Activated B cell treated with CpG ODN at 0.5 μM for 24 hours (primary cell): ENCODE measurements at regions of chr5 and their contacts with region 1.

Region 1: GRCh38 chr5:56270568-56271392 is 37.6 kb upstream of the ANKRD55 start:
- DNase-seq: peak; percentile 60
- ATAC-seq: peak; percentile 98
- H3K4me3 Mint-ChIP-seq: peak overlapping the region; percentile 49
- H3K27ac Mint-ChIP-seq: peak overlapping the region; percentile 37
- H3K4me1 Mint-ChIP-seq: peaks cover 23% of the 10 kb centered on the region
- H3K27me3 Mint-ChIP-seq: no peaks in the 10 kb centered on the region
- CTCF ChIP-seq: peak; percentile 73

Region 2: GRCh38 chr5:55936100-55936693 is 334.6 kb before region 1 on chr5:
- CTCF ChIA-PET with region 1: interaction called, 14 read pairs
- POLR2A ChIA-PET with region 1: no interaction called
- intact Hi-C with region 1: loop called (anchors 1 kb)
- DNase-seq: peak; percentile 56
- ATAC-seq: peak; percentile 93
- H3K4me3 Mint-ChIP-seq: no peak overlapping the region
- H3K27ac Mint-ChIP-seq: no peak overlapping the region
- H3K4me1 Mint-ChIP-seq: no peaks in the 10 kb centered on the region
- H3K27me3 Mint-ChIP-seq: no peaks in the 10 kb centered on the region
- CTCF ChIP-seq: peak; percentile 48

Region 3: DNA sequence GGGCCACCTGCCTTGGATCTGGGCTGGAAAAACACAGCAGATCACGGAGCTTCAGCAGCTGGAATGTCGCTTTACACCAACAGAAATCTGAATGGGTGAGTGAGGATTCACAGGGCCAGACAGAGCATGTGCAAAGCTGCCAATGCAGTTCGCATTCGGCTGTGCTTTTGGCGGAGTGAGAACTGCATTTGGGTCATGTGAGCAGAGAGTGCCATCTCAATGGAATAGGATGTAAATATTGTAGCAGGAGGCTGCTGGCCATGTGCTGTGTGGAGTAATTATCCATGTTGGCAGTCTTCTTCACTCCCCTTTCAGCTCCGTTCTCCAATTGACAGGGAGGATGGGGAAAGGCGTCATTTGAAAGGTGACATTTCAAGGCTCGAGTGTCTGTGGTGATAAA is 37.5 kb before region 1 on chr5 and contains the start of gene ANKRD55:
- CTCF ChIA-PET with region 1: no interaction called
- POLR2A ChIA-PET with region 1: no interaction called
- intact Hi-C with region 1: no loop called
- DNase-seq: no peak
- ATAC-seq: no peak
- H3K4me3 Mint-ChIP-seq: no peak within 1 kb of the TSS
- H3K27ac Mint-ChIP-seq: no peak within 1 kb of the TSS
- H3K4me1 Mint-ChIP-seq: no peaks in the 10 kb centered on the region
- H3K27me3 Mint-ChIP-seq: peaks cover 22% of the 10 kb centered on the region
- CTCF ChIP-seq: no peak
- total RNA-seq, gene ANKRD55: not detected in 2 replicates

Region 4: DNA sequence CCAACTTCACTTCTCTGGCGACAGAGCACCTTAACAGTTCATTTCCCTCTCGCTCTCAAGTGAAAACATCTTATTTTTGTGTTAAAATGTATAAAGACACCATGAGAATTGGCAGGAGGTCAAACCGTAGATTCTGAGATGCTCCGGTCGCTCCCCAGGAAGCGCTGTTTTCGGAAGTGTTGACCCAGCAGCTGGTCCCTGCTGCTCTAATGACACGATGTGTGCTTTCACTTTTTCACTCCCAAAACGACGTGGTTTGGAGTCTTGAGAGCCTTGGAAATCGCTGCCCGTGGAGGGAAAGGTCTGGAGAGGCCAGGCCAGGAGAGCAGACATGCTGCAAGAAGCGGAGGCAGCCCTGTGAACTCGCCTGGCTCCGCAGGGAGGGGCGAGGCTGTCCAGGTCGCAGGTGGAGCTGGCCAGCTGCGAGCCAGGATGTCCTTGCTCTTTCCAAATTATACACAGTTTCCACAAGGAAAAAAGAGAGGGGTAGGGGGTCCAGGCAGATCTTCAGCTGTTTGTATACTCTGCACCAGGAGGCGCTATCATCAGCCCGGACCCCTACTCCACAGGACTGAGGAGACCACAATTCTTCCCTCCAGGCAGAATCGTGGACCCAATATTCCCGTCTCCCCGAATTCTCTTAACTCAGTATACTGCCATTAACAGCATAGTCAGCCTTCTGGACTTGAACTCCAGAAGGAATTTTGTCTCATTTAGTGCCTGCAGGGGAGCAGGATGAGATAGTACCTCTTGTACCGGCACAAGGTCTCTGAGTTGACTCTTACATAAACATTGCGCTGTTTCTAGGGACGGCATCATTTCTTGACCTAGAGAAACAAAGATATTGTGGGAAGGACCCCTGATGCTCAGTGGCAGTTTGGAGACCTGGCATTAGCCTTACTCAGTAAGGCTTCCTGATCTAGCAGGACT is 210.9 kb after region 1 on chr5:
- CTCF ChIA-PET with region 1: interaction called, 19 read pairs
- POLR2A ChIA-PET with region 1: no interaction called
- intact Hi-C with region 1: loop called (anchors 1 kb)
- DNase-seq: peak; percentile 41
- ATAC-seq: peak; percentile 14
- H3K4me3 Mint-ChIP-seq: peak overlapping the region; percentile 88
- H3K27ac Mint-ChIP-seq: peak overlapping the region; percentile 92
- H3K4me1 Mint-ChIP-seq: peaks cover 45% of the 10 kb centered on the region
- H3K27me3 Mint-ChIP-seq: no peaks in the 10 kb centered on the region
- CTCF ChIP-seq: no peak

Region 5: DNA sequence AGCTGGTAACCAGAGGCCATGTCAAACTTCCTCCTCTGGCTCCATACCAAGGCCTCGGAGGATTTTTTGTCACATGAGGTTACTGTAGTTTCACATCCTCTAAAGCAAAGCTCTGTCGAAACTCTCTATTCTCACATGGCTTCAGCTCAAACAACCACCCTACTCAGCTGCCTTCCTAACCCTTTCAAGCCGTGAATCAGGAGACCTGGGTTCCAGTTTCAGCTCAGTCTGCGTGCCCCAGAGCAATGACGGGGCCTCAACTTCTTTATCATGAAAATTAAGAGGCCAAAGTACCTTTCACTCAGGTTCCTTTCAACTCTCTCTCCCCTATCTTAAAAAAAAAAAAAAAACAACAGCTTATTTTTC is 399.3 kb after region 1 on chr5:
- CTCF ChIA-PET with region 1: interaction called, 13 read pairs
- POLR2A ChIA-PET with region 1: interaction called, 3 read pairs
- intact Hi-C with region 1: loop called (anchors 1 kb)
- DNase-seq: peak; percentile 51
- ATAC-seq: peak; percentile 91
- H3K4me3 Mint-ChIP-seq: peak overlapping the region; percentile 69
- H3K27ac Mint-ChIP-seq: peak overlapping the region; percentile 93
- H3K4me1 Mint-ChIP-seq: peaks cover 83% of the 10 kb centered on the region
- H3K27me3 Mint-ChIP-seq: no peaks in the 10 kb centered on the region
- CTCF ChIP-seq: no peak

Region 6: GRCh38 chr5:56827049-56827448 is 556.3 kb after region 1 on chr5:
- CTCF ChIA-PET with region 1: interaction called, 240 read pairs
- POLR2A ChIA-PET with region 1: no interaction called
- intact Hi-C with region 1: no loop called
- DNase-seq: no peak
- ATAC-seq: peak; percentile 11
- H3K4me3 Mint-ChIP-seq: peak overlapping the region; percentile 24
- H3K27ac Mint-ChIP-seq: peak overlapping the region; percentile 73
- H3K4me1 Mint-ChIP-seq: peaks cover 96% of the 10 kb centered on the region
- H3K27me3 Mint-ChIP-seq: no peaks in the 10 kb centered on the region
- CTCF ChIP-seq: no peak

Region 7: DNA sequence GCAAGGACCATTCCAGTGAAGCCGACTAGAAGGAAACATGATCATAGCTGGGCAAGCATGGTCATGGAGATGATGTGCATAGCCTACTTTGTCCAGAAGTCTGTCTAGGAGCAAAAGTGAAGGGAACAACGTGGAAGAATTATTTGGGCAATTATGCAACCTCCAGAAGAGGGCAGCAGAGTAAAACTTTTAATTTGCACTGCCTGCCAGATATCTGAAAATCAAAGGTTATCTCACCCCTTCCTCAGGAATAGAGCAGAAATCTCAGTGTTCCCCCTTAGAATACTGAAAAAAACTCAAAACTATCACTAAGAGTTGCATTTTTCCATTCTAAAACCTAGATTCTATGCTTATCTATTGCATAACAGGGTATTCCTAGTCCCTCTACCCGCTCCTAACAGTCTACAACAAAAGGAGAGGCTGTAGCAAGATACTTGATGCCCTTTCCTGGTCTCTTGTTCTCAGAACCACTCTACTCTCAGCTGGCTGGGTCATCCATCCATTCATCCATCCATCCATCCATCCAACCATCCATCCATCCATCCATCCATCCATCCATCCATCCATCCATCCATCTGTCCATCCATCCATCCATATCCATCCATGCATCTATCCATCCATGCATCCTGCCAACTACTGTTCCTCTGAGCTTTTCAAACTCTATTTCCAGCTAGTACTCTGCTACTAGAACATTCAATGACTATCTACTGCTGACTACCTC is 630.2 kb after region 1 on chr5:
- CTCF ChIA-PET with region 1: interaction called, 11 read pairs
- POLR2A ChIA-PET with region 1: no interaction called
- intact Hi-C with region 1: loop called (anchors 1 kb)
- DNase-seq: no peak
- ATAC-seq: peak; percentile 68
- H3K4me3 Mint-ChIP-seq: no peak overlapping the region
- H3K27ac Mint-ChIP-seq: no peak overlapping the region
- H3K4me1 Mint-ChIP-seq: no peaks in the 10 kb centered on the region
- H3K27me3 Mint-ChIP-seq: no peaks in the 10 kb centered on the region
- CTCF ChIP-seq: peak; percentile 10

Region 8: GRCh38 chr5:57221049-57221568 is 950.3 kb after region 1 on chr5:
- CTCF ChIA-PET with region 1: interaction called, 7 read pairs
- POLR2A ChIA-PET with region 1: no interaction called
- intact Hi-C with region 1: loop called (anchors 1 kb)
- DNase-seq: no peak
- ATAC-seq: peak; percentile 86
- H3K4me3 Mint-ChIP-seq: no peak overlapping the region
- H3K27ac Mint-ChIP-seq: no peak overlapping the region
- H3K4me1 Mint-ChIP-seq: peaks cover 34% of the 10 kb centered on the region
- H3K27me3 Mint-ChIP-seq: no peaks in the 10 kb centered on the region
- CTCF ChIP-seq: peak; percentile 22